ENCODE measurements at regions of chr11 and their contacts with region 1.

Region 1: DNA sequence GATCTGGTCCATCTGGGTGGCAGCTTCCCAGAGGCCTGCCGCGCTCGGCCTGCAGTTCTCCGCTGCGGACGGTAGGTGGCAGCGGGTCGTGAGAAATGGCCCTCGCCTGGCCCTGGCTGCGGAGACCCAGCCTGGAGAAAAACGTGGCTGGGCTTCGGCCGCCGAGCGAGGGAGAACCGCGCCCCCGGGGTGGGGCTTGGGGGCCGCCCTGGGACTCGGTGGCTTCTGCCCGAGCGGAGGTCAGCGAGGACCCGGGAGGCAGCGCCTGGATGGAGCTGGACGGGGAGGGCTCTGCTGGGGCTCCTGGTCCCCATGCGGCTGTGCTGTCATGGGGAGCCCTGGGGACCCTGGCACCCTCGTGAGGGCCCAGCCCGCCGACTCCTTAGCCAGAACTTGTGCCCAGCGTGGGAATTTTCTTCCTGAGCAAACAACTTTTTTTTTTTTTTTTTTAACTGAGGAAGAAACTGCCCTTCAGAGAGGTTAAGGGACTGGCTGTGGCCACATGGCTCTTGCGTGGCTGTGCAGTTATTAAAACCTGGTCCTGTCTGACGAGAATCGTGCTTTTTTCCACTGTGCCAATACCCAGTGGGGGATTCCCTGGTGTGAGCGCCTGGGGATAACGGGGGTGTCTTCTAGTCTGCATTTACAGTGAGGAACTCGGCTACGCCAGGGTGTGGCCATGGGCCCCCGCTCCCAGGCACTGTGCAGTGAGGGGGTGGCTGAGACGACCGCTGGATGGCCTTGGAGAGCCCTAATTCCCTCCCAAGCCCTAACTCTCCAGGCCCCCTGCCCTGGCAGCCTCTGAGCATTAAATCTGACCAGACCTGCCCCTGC is 535.6 kb downstream of the INSC start:
- DNase-seq: peak; percentile 92 to 94 (median 94)
- ATAC-seq: peak; percentile 99
- H3K4me3 ChIP-seq: peak overlapping the region; percentile 20; the same call in 1 of the 2 replicates
- H3K27ac ChIP-seq: no peak overlapping the region
- H3K4me1 ChIP-seq: peaks cover 11 to 15% of the 10 kb centered on the region in 2 experiments; a peak in 4 of 5 replicates
- H3K27me3 ChIP-seq: no peaks in the 10 kb centered on the region; a peak in 1 of 5 replicates
- CTCF ChIP-seq: peak; percentile 91 to 94 (median 93)
- EP300 ChIP-seq: peak; percentile 61
- POLR2A ChIP-seq: no peak
- RAD21 ChIP-seq: peak; percentile 82 to 89

Region 2: DNA sequence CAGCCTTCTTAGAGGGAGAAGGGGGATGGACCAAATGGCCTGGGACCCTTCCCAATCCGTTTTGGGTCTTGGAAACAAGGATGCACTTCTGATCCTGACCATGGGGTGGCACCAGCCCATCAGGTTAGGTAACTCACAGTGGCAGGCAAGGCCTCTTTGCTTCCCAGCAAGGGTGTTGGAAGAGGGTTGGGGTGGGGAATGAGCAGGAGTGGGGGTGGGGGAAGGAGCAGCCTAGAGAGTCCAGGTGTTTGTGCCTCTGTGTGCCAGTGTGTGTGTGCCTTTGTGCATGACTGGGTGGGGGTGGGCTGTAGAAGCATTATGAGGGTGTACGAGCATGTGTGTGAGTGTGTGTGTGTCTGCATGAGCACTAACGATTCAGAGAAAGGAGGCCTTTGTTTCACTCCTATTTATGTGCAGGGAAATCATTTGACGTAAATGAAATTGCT is 322.5 kb before region 1 on chr11:
- CTCF ChIA-PET with region 1: no interaction called
- POLR2A ChIA-PET with region 1: no interaction called
- in situ Hi-C with region 1: no loop called
- intact Hi-C with region 1: loop called (anchors 10 kb)
- DNase-seq: peak; percentile 58 to 65 (median 62)
- ATAC-seq: peak; percentile 91
- H3K4me3 ChIP-seq: no peak overlapping the region
- H3K27ac ChIP-seq: no peak overlapping the region
- H3K4me1 ChIP-seq: no peaks in the 10 kb centered on the region
- H3K27me3 ChIP-seq: no peaks in the 10 kb centered on the region; a peak in 1 of 5 replicates
- CTCF ChIP-seq: peak; percentile 63 to 71 (median 70)
- EP300 ChIP-seq: no peak
- POLR2A ChIP-seq: no peak
- RAD21 ChIP-seq: peak; percentile 35 to 68

Region 3: GRCh38 chr11:15519124-15519791 is 131.1 kb before region 1 on chr11:
- CTCF ChIA-PET with region 1: no interaction called
- POLR2A ChIA-PET with region 1: no interaction called
- in situ Hi-C with region 1: no loop called
- intact Hi-C with region 1: no loop called
- DNase-seq: no peak
- ATAC-seq: no peak
- H3K4me3 ChIP-seq: no peak overlapping the region
- H3K27ac ChIP-seq: no peak overlapping the region
- H3K4me1 ChIP-seq: no peaks in the 10 kb centered on the region
- H3K27me3 ChIP-seq: no peaks in the 10 kb centered on the region
- CTCF ChIP-seq: no peak
- EP300 ChIP-seq: no peak
- POLR2A ChIP-seq: no peak
- RAD21 ChIP-seq: no peak

Region 4: DNA sequence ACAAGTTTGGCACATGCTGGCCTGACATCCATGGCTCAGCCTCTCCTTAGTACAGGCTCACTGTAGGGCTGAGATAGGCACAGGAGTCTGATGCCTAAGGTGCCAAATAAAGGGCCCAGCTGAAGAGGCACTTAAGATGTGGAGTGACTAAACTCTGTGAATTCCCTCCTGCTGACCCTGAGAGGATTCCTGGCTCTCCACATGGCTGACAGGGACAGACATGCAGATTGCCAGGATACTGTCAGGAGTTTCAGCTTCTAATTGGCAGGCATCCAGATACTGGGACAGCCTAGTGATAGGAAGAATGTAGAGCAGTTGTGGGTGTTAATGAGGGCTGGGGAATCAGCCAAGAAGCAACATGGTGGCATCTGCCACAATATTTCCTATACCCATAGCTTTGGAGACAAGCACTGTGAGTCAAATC is 23.1 kb after region 1 on chr11:
- CTCF ChIA-PET with region 1: no interaction called
- POLR2A ChIA-PET with region 1: no interaction called
- in situ Hi-C with region 1: no loop called
- intact Hi-C with region 1: no loop called
- DNase-seq: no peak
- ATAC-seq: no peak
- H3K4me3 ChIP-seq: no peak overlapping the region
- H3K27ac ChIP-seq: no peak overlapping the region
- H3K4me1 ChIP-seq: peaks cover 0 to 3% of the 10 kb centered on the region in 2 experiments; a peak in 2 of 5 replicates
- H3K27me3 ChIP-seq: no peaks in the 10 kb centered on the region; a peak in 1 of 5 replicates
- CTCF ChIP-seq: no peak
- EP300 ChIP-seq: no peak
- POLR2A ChIP-seq: no peak
- RAD21 ChIP-seq: no peak

Region 5: DNA sequence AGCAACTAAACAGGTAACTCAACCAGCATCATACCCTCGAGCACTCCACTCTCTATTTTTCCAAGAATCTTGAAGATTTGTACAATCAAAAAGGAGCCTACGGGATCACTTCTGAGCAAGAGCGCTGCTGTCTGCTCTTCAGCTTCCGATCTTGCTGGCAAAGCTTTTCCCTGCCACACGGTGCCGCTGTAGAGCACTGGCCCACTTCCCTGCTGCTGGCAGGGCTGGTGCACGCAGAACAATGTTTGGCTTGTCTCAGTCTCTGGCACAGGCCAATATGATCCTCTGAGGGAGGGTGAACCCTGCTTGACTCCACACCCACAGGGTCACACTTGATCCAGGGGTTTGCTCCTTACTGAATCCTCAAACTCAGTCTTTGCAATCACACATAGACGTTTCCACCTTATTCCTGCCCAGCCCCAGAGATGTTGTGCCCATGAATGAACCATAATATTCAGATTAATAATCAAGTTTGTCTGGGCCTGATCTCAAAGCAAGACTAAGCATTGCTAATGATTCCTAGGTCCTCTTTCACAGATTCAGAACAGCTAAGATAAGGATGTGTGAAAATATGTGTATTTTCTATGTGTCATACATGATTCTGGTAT is 169.5 kb after region 1 on chr11:
- CTCF ChIA-PET with region 1: interaction called, 3 read pairs
- POLR2A ChIA-PET with region 1: no interaction called
- in situ Hi-C with region 1: no loop called
- intact Hi-C with region 1: loop called (anchors 10 kb)
- DNase-seq: peak; percentile 58 to 66 (median 61)
- ATAC-seq: peak; percentile 95
- H3K4me3 ChIP-seq: no peak overlapping the region
- H3K27ac ChIP-seq: no peak overlapping the region
- H3K4me1 ChIP-seq: no peaks in the 10 kb centered on the region
- H3K27me3 ChIP-seq: peaks cover 0 to under 1% of the 10 kb centered on the region in 2 experiments; a peak in 2 of 5 replicates
- CTCF ChIP-seq: peak; percentile 77 to 91 (median 85)
- EP300 ChIP-seq: no peak
- POLR2A ChIP-seq: no peak
- RAD21 ChIP-seq: peak; percentile 37 to 68

Region 6: DNA sequence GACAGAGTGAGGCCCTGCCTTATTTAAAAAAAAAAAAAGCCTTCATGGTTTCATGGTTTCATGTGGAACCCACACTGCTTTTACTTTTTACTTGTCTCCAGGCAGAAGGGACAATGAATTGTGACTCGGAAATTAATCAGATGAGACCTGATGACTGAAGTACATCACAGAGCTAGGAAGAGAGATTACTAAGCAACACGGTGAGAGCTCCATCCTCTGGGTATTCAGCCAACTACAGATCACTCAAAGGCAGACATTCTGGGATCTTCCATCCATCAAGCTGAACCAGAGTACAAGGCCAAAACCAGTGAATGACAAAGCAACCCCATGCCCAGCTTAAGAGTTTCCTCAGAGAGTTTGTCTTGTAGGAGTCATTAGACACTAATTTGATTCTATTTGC is 272.9 kb after region 1 on chr11:
- CTCF ChIA-PET with region 1: no interaction called
- POLR2A ChIA-PET with region 1: no interaction called
- in situ Hi-C with region 1: no loop called
- intact Hi-C with region 1: loop called (anchors 5 kb)
- DNase-seq: peak in 2 of 4 experiments; percentile 31 to 42
- ATAC-seq: peak; percentile 83
- H3K4me3 ChIP-seq: no peak overlapping the region
- H3K27ac ChIP-seq: no peak overlapping the region
- H3K4me1 ChIP-seq: no peaks in the 10 kb centered on the region
- H3K27me3 ChIP-seq: peaks cover 3 to 13% of the 10 kb centered on the region in 2 experiments; a peak in 3 of 5 replicates
- CTCF ChIP-seq: peak; percentile 45 to 59 (median 48)
- EP300 ChIP-seq: no peak
- POLR2A ChIP-seq: no peak
- RAD21 ChIP-seq: peak; percentile 64